Heart right ventricle (tissue), 16 donors: ENCODE measurements at regions of chr9 and their contacts with region 1.

Region 1: DNA sequence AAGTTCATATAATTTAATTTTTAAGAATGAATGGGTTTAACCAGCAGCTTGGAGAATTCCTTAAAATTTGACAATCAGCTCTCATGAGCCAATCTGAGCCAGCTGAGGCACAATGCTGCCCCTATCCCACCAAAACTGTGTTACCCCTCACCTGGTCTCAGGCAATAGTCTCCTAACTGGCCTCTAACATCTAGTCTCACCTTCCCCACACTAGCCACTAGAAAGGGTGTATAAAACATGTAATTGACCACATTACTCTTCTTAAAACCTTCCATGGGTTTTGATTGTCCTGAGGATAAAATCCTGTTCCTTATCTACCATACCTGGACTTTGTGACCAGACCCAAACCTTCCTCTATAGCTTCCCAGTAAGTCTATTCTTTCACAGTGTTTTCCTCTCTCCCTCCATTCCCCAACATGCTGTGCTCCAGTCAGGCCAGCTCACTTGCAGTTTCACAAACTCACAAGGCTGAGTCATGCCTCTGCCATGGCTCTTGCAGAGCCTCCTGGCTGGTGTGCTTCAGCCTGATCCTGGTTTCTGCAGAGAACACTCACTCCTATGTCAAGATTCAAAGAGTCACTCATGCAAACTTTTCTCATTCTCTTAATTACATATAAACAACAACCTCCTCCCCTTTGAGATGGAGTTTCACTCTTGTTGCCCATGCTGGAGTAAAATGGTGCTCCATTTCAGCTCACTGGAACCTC is 16.0 kb upstream of the ZCCHC7 start:
- DNase-seq: no peak
- ATAC-seq: no peak
- H3K4me3 ChIP-seq: no peak overlapping the region
- H3K27ac ChIP-seq: no peak overlapping the region
- H3K4me1 ChIP-seq: no peaks in the 10 kb centered on the region
- H3K27me3 ChIP-seq: peaks cover 0 to 39% (median 8%) of the 10 kb centered on the region in 7 donors
- CTCF ChIP-seq: no peak

Region 2: DNA sequence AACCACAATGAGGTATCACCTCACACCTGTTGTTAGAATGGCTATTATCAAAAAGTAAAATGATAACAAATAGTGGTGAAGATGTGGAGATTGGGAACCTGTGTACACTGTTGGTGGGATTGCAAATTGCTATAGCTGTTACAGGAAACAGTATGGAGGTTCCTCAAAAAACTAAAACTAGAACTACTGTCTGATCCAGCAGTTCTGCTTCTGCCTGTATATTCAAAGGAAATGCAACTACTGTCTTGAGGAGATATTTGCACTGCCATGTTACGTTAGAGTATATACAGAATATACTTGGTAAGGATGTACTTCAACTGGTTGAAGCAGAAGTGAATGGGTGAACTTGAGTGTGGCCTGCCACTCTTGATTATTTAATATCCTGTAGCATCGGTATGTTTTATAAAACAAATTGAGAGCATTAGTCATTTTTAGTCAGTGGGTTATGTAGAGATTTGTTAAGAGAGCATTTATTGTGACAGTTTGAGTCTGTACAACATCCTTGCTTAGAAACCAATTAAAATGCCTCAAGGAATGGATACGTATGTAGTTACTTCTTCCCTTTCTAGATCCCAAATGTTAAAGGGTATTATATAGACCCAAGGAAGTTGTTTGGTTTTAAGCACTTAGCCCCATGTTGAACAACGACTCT is 53.5 kb after region 1 on chr9:
- intact Hi-C with region 1: loop called in 1 of 10 experiments (anchors 2 kb)
- DNase-seq: no peak
- ATAC-seq: no peak
- H3K4me3 ChIP-seq: no peak overlapping the region
- H3K27ac ChIP-seq: peak overlapping the region in 1 of 10 donors; percentile 2
- H3K4me1 ChIP-seq: peaks cover 0 to 13% (median 0%) of the 10 kb centered on the region in 9 donors
- H3K27me3 ChIP-seq: no peaks in the 10 kb centered on the region
- CTCF ChIP-seq: no peak

Region 3: DNA sequence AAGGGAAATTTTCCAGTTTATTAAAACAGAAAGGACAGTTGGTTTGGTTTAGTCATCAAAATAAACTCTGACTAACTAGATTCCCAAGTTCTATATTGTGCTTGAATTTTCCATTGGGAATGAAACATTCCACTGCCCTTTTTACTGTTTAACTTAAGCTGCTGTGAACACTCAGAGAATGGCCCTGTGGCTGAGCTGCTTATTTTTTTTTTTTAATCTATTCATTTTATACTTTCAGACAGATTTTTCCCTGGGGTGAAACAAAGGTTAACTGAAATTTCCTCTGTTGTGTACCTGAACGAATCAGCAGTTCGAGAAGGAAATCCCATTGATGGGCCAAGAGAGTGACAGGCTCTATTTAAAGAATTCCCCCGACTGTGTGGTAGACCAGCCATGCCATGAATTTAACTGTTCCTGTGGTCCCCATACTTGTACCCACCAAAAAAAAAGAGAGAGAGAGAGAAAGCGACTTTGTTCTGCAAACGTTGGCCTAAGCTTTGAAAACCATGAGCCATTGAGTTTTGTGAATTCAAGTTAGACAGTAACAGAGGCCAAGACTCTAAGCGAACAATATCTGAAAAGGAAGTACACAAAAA is 179.5 kb after region 1 on chr9:
- intact Hi-C with region 1: no loop called
- DNase-seq: no peak
- ATAC-seq: no peak
- H3K4me3 ChIP-seq: no peak overlapping the region
- H3K27ac ChIP-seq: peak overlapping the region in 1 of 10 donors; percentile 37
- H3K4me1 ChIP-seq: peaks cover 0 to 21% (median 0%) of the 10 kb centered on the region in 9 donors
- H3K27me3 ChIP-seq: no peaks in the 10 kb centered on the region
- CTCF ChIP-seq: no peak